PC-9 (cell line): ENCODE measurements at regions of chr3 and their contacts with region 1.

Region 1: GRCh38 chr3:194536871-194537637 is 50.3 kb upstream of the ATP13A3 start:
- DNase-seq: peak; percentile 69 to 79
- H3K4me3 ChIP-seq: peak overlapping the region; percentile 9; the same call in 1 of the 2 replicates
- H3K27ac ChIP-seq: peak overlapping the region; percentile 86
- H3K4me1 ChIP-seq: peaks cover 38% of the 10 kb centered on the region
- H3K27me3 ChIP-seq: no peaks in the 10 kb centered on the region
- CTCF ChIP-seq: no peak

Region 2: DNA sequence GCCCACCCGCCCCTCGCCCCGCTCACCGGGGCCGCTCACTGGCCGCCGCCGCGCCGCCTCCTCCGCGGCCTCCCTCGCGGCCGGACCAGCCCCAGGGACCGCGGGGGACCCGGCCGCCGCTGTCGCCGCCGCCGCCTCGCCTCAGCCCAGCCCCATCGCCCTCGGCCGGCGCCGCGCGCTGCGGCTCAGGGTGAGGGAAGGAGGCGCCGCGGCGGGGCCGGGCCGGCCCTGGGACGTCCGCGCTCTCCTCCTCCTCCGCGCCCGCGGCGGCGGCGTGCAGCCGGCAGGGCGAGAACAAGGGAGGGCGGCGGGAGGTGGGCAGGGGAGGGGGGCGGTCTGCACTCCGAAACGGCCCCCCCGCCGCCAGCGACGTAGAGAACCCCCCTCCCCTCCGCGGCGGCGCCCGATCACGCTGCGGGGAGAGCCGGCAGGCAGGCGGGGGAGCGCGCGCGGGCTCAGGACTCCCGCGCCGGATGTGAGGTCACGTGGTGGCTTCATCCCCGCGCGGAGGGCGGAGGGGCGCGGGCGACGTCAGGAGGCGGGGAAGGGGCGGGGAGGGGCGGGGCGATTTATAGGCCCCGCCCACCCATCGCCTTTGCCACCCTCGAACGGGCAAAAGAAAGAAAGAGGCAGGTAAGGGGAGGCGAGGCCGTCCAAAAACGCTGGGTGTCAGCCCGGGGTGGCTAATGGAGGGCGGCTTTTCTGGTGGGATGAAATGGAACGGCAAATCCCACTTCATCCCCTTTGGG is 50.3 kb before region 1 on chr3 and contains the start of gene ATP13A3:
- CTCF ChIA-PET with region 1: no interaction called
- POLR2A ChIA-PET with region 1: no interaction called
- intact Hi-C with region 1: loop called (anchors 1 kb)
- DNase-seq: peak; percentile 80 to 93
- H3K4me3 ChIP-seq: peak within 1 kb of the TSS; percentile 64
- H3K27ac ChIP-seq: peak within 1 kb of the TSS; percentile 96
- H3K4me1 ChIP-seq: peaks cover 71% of the 10 kb centered on the region
- H3K27me3 ChIP-seq: no peaks in the 10 kb centered on the region
- CTCF ChIP-seq: no peak
- total RNA-seq, gene ATP13A3: 203 and 242 TPM in 2 replicates

Region 3: GRCh38 chr3:194497821-194498598 is 39.0 kb before region 1 on chr3:
- CTCF ChIA-PET with region 1: no interaction called
- POLR2A ChIA-PET with region 1: interaction called, 11 read pairs
- intact Hi-C with region 1: no loop called
- DNase-seq: peak; percentile 58 to 93
- H3K4me3 ChIP-seq: no peak overlapping the region
- H3K27ac ChIP-seq: peak overlapping the region; percentile 45
- H3K4me1 ChIP-seq: peaks cover 60% of the 10 kb centered on the region
- H3K27me3 ChIP-seq: no peaks in the 10 kb centered on the region
- CTCF ChIP-seq: no peak

Region 4: DNA sequence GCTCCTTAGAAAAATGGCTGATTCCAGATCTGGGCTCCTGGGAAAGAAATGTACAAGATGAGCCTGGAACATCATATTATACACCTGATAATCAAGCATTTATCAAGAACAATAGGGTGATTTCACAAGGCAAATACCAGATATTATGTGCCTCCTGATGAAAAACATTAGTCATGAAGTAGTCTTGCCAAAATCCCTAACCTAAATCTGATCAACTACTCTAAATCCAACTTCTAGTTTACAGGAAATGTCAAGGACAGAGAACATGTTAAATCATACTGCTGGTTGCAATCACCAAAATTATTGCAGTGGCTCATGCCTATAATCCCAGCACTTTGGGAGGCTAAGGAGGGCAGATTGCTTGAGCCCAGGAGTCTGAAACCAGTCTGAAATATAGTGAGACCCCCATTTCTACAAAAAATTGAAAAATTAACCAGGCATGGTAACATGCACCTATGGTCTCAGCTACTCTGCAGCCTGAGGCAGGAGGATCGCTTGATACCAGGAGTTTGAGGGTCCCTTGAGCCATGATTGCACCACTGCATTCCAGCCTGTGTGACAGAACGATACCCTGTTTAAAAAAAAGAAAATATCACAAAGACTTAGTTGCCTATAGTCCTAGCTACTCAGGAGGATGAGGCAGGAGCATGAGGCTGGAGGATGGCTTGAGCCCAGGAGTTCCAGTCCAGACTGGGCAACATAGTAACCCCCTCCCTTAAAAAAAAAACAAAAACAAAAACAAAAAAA is 15.4 kb before region 1 on chr3:
- CTCF ChIA-PET with region 1: interaction called, 3 read pairs
- POLR2A ChIA-PET with region 1: interaction called, 40 read pairs
- intact Hi-C with region 1: no loop called
- DNase-seq: peak in 1 of 2 experiments; percentile 93
- H3K4me3 ChIP-seq: no peak overlapping the region
- H3K27ac ChIP-seq: peak overlapping the region; percentile 59
- H3K4me1 ChIP-seq: peaks cover 65% of the 10 kb centered on the region
- H3K27me3 ChIP-seq: no peaks in the 10 kb centered on the region
- CTCF ChIP-seq: no peak

Region 5: GRCh38 chr3:194556086-194557056 is 19.3 kb after region 1 on chr3:
- CTCF ChIA-PET with region 1: no interaction called
- POLR2A ChIA-PET with region 1: no interaction called
- intact Hi-C with region 1: loop called (anchors 1 kb)
- DNase-seq: peak in 1 of 2 experiments; percentile 46
- H3K4me3 ChIP-seq: no peak overlapping the region
- H3K27ac ChIP-seq: no peak overlapping the region
- H3K4me1 ChIP-seq: peaks cover 8% of the 10 kb centered on the region
- H3K27me3 ChIP-seq: no peaks in the 10 kb centered on the region
- CTCF ChIP-seq: no peak

Region 6: DNA sequence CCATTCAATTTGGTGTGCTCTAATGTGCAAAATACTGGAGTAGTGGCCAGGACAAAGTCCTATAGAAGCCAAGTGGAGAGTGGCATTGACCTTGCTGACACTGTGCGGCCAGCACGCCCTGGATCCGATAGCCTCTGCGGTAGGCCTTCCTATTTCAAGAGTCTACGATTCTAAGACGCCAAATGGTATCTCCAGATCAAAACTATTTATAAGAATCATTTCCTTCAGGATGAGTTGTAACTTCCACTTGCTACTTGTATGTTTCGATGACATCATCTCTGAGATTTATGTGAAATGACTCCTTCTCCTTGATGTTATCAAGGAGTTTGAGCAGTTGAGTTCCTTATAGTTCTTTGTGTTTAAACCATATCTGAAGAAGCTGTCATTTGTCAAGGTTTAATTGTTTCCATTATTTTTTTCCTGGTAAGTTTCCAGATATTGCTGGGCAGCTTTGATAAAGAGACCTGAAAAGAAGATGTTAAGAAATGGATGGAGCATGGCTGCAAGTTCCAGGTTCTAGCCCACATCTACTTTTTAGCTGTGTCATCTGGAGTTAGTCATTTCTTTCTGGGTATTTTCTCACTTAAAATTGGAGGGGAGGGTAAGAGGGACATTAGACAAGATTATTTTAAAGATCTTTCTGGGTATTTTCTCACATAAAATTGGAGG is 24.4 kb after region 1 on chr3:
- CTCF ChIA-PET with region 1: interaction called, 5 read pairs
- POLR2A ChIA-PET with region 1: no interaction called
- intact Hi-C with region 1: loop called (anchors 2 kb)
- DNase-seq: peak; percentile 69 to 96
- H3K4me3 ChIP-seq: no peak overlapping the region
- H3K27ac ChIP-seq: peak overlapping the region; percentile 69
- H3K4me1 ChIP-seq: peaks cover 17% of the 10 kb centered on the region
- H3K27me3 ChIP-seq: no peaks in the 10 kb centered on the region
- CTCF ChIP-seq: no peak